ENCODE measurements at regions of chr9 and their contacts with region 1.

Region 1: DNA sequence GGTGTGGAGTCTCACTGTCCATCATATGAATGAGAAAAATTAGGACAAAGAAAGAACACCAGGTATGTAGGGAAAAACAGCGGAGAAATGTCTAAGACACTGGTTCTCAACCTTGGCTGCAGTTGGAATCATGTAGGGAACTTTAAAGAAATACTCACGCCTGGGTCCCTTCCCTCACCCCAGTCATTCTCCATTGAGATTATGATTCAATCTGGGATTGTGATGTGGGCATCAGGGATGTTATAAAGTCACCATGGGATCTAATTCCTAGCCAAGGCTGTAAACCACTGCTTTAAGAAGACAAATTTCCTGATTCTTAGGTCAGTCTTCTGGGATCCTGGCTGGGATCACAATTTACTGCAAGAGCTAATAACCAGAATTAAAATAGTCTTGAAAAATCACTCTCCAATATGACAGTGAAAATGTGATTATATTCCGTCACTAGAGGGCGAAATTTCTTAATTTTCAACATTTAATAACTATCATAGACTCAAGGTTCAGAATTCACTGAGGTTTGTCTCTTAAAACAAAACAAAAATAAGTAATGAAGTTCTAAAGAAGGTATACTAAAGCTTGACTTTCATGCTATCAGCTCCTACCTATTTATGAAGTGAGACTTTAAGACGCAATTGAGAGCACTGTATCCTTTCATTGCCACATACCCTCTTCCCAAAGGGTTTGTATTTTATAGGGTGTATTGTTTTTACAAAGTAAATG is 60.5 kb downstream of the GLDC start:
- DNase-seq: peak; percentile 30
- H3K4me3 ChIP-seq: no peak overlapping the region
- H3K27ac ChIP-seq: no peak overlapping the region
- H3K4me1 ChIP-seq: no peaks in the 10 kb centered on the region
- H3K27me3 ChIP-seq: no peaks in the 10 kb centered on the region; the same call in 1 of the 2 replicates
- CTCF ChIP-seq: peak; percentile 67
- EP300 ChIP-seq: no peak
- RAD21 ChIP-seq: peak; percentile 65

Region 2: GRCh38 chr9:6598249-6598725 is 13.2 kb after region 1 on chr9:
- CTCF ChIA-PET with region 1: interaction called, 15 read pairs
- POLR2A ChIA-PET with region 1: no interaction called
- DNase-seq: no peak
- H3K4me3 ChIP-seq: no peak overlapping the region
- H3K27ac ChIP-seq: no peak overlapping the region
- H3K4me1 ChIP-seq: no peaks in the 10 kb centered on the region
- H3K27me3 ChIP-seq: no peaks in the 10 kb centered on the region
- CTCF ChIP-seq: no peak
- EP300 ChIP-seq: no peak
- RAD21 ChIP-seq: no peak

Region 3: GRCh38 chr9:6667633-6668280 is 82.7 kb after region 1 on chr9:
- CTCF ChIA-PET with region 1: interaction called, 21 read pairs
- POLR2A ChIA-PET with region 1: no interaction called
- DNase-seq: peak; percentile 75
- H3K4me3 ChIP-seq: no peak overlapping the region
- H3K27ac ChIP-seq: no peak overlapping the region
- H3K4me1 ChIP-seq: no peaks in the 10 kb centered on the region
- H3K27me3 ChIP-seq: no peaks in the 10 kb centered on the region
- CTCF ChIP-seq: peak; percentile 73
- EP300 ChIP-seq: no peak
- RAD21 ChIP-seq: peak; percentile 73

Region 4: DNA sequence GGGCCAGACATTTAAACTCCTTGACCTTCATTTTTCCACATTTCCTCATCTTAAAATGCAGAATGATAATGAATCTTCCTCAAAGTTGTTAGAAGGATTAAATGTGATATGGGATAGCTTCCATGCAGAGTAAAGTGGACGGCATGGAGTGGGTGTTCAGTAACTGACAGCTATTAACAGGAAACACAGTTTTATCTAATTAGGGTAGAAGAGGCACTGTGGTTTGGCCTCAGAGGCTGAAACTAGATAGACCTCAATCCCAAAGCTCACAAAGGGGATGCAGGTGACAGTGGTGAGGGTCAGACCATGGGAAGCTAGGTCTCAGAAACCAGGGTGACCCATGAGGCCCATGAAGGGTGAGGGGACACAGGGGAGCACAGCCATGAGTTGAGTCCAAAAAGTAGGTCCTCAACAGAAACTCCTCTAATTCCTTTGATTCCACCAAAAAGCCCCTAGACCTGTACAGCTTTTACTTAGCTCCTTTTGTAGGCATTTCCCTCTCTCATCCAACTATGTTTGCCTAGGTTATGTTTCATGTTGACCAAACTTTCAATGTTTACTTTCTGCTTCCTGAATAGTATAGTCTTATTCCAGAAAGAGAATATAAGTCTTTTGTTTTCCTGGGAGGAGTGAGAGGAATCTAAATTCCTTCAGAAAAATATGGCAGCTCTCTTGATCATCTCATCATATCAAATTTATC is 88.4 kb after region 1 on chr9:
- CTCF ChIA-PET with region 1: interaction called, 21 read pairs
- POLR2A ChIA-PET with region 1: no interaction called
- DNase-seq: no peak
- H3K4me3 ChIP-seq: no peak overlapping the region
- H3K27ac ChIP-seq: no peak overlapping the region
- H3K4me1 ChIP-seq: no peaks in the 10 kb centered on the region
- H3K27me3 ChIP-seq: no peaks in the 10 kb centered on the region
- CTCF ChIP-seq: no peak
- EP300 ChIP-seq: no peak
- RAD21 ChIP-seq: no peak

Region 5: DNA sequence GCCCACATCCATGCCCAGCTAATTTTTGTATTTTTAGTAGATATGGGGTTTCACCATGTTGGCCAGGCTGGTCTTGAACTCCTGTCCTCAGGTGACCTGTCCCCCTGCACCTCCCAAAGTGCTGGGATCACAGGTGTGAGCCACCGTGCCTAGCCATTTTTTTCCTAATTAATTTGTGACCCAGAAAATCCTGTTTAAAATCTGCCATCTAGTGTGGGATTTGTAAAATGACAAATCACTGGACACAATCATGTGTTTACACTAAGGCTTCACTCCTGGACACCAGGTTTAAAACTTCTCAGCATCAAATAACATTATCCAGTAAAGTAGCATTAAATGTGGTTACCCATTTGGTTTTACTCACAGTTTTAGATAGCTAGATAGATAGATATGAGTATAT is 154.2 kb after region 1 on chr9:
- CTCF ChIA-PET with region 1: interaction called, 20 read pairs
- POLR2A ChIA-PET with region 1: no interaction called
- DNase-seq: peak; percentile 33
- H3K4me3 ChIP-seq: no peak overlapping the region
- H3K27ac ChIP-seq: no peak overlapping the region
- H3K4me1 ChIP-seq: no peaks in the 10 kb centered on the region
- H3K27me3 ChIP-seq: no peaks in the 10 kb centered on the region
- CTCF ChIP-seq: peak; percentile 52
- EP300 ChIP-seq: no peak
- RAD21 ChIP-seq: peak; percentile 65

Region 6: GRCh38 chr9:6931913-6932312 is 346.9 kb after region 1 on chr9:
- CTCF ChIA-PET with region 1: no interaction called
- POLR2A ChIA-PET with region 1: no interaction called
- DNase-seq: no peak
- H3K4me3 ChIP-seq: no peak overlapping the region
- H3K27ac ChIP-seq: no peak overlapping the region
- H3K4me1 ChIP-seq: no peaks in the 10 kb centered on the region; a peak in 2 of 4 replicates
- H3K27me3 ChIP-seq: no peaks in the 10 kb centered on the region
- CTCF ChIP-seq: no peak
- EP300 ChIP-seq: no peak
- RAD21 ChIP-seq: no peak